Common myeloid progenitor, CD34-positive (primary cell): ENCODE measurements at regions of chr10 and their contacts with region 1.

Region 1: DNA sequence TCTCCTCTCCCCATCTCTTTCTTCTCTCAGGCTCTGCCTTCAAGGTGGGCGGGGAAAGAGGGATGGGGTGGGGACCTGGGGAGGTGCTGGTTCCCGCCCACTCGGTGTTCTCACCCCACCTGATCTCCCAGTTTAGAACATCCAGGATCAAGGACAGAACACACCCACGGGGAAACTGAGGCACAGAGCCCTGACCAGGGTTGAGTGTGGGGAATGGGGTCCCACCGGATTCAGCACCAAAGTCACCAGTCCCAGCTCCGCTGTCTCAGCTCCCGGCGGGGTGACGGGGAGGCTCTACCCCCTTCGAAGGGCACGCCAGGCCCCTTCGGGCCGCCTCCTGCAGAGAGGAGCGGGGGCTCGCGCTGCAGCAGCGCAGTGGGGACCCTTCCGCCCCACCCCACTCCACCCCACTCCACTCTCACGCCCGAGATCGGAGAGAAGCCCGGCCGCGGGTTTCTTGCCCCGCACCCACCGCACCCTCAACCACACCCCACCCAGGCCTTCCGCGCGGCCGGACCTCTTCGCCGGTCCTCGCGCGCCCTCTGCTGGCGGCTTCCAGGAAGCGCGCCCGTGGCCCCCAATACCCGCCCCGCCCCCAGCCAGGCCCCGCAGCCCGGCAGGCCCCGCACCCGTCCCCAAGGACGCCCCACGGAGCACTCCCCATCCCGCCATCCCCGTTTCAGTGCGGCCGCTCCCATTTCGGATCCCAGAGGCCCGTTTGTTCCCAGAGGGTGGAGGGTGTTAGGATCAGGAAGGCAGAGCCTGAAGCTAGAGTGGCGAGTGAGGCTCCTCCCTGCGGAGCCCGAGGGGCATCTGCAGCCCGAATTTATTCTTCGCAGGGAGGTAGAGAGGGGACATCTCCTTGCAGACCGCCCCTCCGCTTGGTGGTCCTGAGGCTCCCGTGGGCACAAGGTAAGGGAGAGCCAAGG is 18.0 kb downstream of the POLL start:
- DNase-seq: peak; percentile 67 to 79 (median 77)
- H3K4me3 ChIP-seq: peak overlapping the region; percentile 27 to 82 (median 66)
- H3K27ac ChIP-seq: no peak overlapping the region
- H3K4me1 ChIP-seq: peaks cover 0 to 25% (median 22%) of the 10 kb centered on the region in 4 experiments
- H3K27me3 ChIP-seq: peaks cover 4 to 57% (median 28%) of the 10 kb centered on the region in 5 experiments

Region 2: DNA sequence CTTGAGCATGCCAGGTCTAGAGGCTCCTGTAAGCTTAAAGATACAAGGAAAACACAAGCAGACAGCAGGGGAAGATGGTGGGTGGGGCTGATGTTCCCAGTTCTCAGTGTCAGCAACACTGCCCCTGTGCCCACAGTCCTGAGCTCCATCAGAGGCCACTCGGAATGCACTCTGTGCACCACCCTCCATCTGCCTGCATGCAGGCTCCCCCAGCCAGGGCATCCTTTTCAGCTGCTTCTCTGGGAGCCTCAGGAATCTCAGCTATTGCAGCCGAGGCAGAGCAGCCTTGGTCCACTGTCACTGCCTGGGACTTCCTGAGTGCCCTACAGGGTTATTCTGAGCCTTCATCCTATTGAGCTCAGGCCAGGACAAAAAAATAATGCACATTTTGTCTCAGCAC is 363.1 kb before region 1 on chr10:
- CTCF ChIA-PET with region 1: interaction called, 10 read pairs
- POLR2A ChIA-PET with region 1: no interaction called
- DNase-seq: no peak
- H3K4me3 ChIP-seq: no peak overlapping the region
- H3K27ac ChIP-seq: no peak overlapping the region
- H3K4me1 ChIP-seq: no peaks in the 10 kb centered on the region
- H3K27me3 ChIP-seq: peaks cover 12 to 72% (median 29%) of the 10 kb centered on the region in 5 experiments

Region 3: GRCh38 chr10:101272229-101272868 is 297.8 kb before region 1 on chr10:
- CTCF ChIA-PET with region 1: interaction called, 22 read pairs
- POLR2A ChIA-PET with region 1: no interaction called
- DNase-seq: peak; percentile 56 to 76 (median 63)
- H3K4me3 ChIP-seq: no peak overlapping the region
- H3K27ac ChIP-seq: no peak overlapping the region
- H3K4me1 ChIP-seq: no peaks in the 10 kb centered on the region
- H3K27me3 ChIP-seq: peaks cover 3 to 46% (median 22%) of the 10 kb centered on the region in 5 experiments

Region 4: GRCh38 chr10:101305320-101306241 is 264.5 kb before region 1 on chr10:
- CTCF ChIA-PET with region 1: interaction called, 11 read pairs
- POLR2A ChIA-PET with region 1: no interaction called
- DNase-seq: no peak
- H3K4me3 ChIP-seq: no peak overlapping the region
- H3K27ac ChIP-seq: no peak overlapping the region
- H3K4me1 ChIP-seq: peaks cover 0 to 3% (median 1%) of the 10 kb centered on the region in 4 experiments
- H3K27me3 ChIP-seq: peaks cover 5 to 69% (median 14%) of the 10 kb centered on the region in 5 experiments

Region 5: GRCh38 chr10:101580486-101581399 is 10.6 kb after region 1 on chr10:
- CTCF ChIA-PET with region 1: interaction called, 31 read pairs
- POLR2A ChIA-PET with region 1: no interaction called
- DNase-seq: no peak
- H3K4me3 ChIP-seq: no peak overlapping the region
- H3K27ac ChIP-seq: no peak overlapping the region
- H3K4me1 ChIP-seq: no peaks in the 10 kb centered on the region
- H3K27me3 ChIP-seq: no peaks in the 10 kb centered on the region